ENCODE measurements at regions of chr2 and their contacts with region 1.

Region 1: DNA sequence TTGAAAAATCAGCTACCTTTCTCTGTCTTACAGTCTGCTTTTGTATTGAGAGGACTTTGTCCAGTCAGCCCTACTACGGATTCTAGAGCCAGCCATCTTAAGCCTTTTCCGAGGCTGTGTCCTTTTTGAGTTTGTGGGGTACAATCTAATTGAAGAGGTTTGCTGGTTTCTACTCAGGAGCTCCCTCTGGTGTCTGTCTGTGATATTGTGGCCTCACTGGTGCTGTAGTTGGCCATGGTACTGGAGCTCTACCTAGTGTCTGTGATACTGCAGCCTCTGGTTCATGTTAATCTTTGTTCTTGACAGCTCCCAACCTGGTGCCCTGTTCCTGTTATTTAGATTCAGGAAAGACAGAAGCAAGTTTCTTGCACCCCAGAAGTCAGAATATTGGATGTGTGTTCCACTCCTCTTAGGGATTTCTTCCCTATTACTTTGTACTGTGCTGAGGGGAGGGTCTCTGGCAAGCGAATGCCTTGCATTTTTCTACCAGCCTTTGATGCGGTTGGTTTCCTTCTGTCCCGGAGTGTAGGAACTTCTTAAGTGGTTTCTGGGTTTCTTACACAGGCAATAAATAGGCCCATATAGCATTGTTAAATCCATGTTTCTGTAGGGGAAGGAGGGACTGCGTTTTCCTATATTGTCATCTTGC is 78.5 kb downstream of the ACSL3 start:
- DNase-seq: peak; percentile 68
- ATAC-seq: peak; percentile 88
- H3K4me3 ChIP-seq: no peak overlapping the region
- H3K27ac ChIP-seq: no peak overlapping the region
- H3K4me1 ChIP-seq: peaks cover 4% of the 10 kb centered on the region; the same call in 1 of the 2 replicates
- H3K27me3 ChIP-seq: no peaks in the 10 kb centered on the region
- CTCF ChIP-seq: peak; percentile 88
- POLR2A ChIP-seq: no peak
- RAD21 ChIP-seq: peak; percentile 74

Region 2: GRCh38 chr2:222655787-222656525 is 283.4 kb before region 1 on chr2 and contains the start of gene FARSB:
- CTCF ChIA-PET with region 1: no interaction called
- POLR2A ChIA-PET with region 1: no interaction called
- dilution Hi-C with region 1: no loop called
- in situ Hi-C with region 1: no loop called
- intact Hi-C with region 1: loop called (anchors 1 kb)
- DNase-seq: peak; percentile 96
- ATAC-seq: peak; percentile 96
- H3K4me3 ChIP-seq: peak within 1 kb of the TSS; percentile 89
- H3K27ac ChIP-seq: peak within 1 kb of the TSS; percentile 82
- H3K4me1 ChIP-seq: no peaks in the 10 kb centered on the region; the same call in 1 of the 2 replicates
- H3K27me3 ChIP-seq: no peaks in the 10 kb centered on the region
- CTCF ChIP-seq: no peak
- POLR2A ChIP-seq: peak; percentile 47; the same call in 1 of the 2 replicates
- RAD21 ChIP-seq: no peak
- total RNA-seq, gene FARSB: 21.1 and 27.2 TPM in 2 replicates

Region 3: GRCh38 chr2:222690564-222691200 is 248.7 kb before region 1 on chr2:
- CTCF ChIA-PET with region 1: interaction called, 4 read pairs
- POLR2A ChIA-PET with region 1: no interaction called
- dilution Hi-C with region 1: no loop called
- in situ Hi-C with region 1: loop called (anchors 10 kb)
- intact Hi-C with region 1: loop called (anchors 1 kb)
- DNase-seq: peak; percentile 78
- ATAC-seq: peak; percentile 92
- H3K4me3 ChIP-seq: no peak overlapping the region
- H3K27ac ChIP-seq: no peak overlapping the region
- H3K4me1 ChIP-seq: no peaks in the 10 kb centered on the region
- H3K27me3 ChIP-seq: no peaks in the 10 kb centered on the region; the same call in 1 of the 2 replicates
- CTCF ChIP-seq: peak; percentile 100
- POLR2A ChIP-seq: no peak
- RAD21 ChIP-seq: peak; percentile 85

Region 4: GRCh38 chr2:222707689-222708525 is 231.4 kb before region 1 on chr2:
- CTCF ChIA-PET with region 1: interaction called, 7 read pairs
- POLR2A ChIA-PET with region 1: no interaction called
- dilution Hi-C with region 1: no loop called
- in situ Hi-C with region 1: no loop called
- intact Hi-C with region 1: loop called (anchors 5 kb)
- DNase-seq: peak; percentile 87
- ATAC-seq: peak; percentile 18
- H3K4me3 ChIP-seq: no peak overlapping the region
- H3K27ac ChIP-seq: no peak overlapping the region
- H3K4me1 ChIP-seq: peaks cover 11% of the 10 kb centered on the region
- H3K27me3 ChIP-seq: no peaks in the 10 kb centered on the region
- CTCF ChIP-seq: peak; percentile 81
- POLR2A ChIP-seq: no peak
- RAD21 ChIP-seq: peak; percentile 76

Region 5: DNA sequence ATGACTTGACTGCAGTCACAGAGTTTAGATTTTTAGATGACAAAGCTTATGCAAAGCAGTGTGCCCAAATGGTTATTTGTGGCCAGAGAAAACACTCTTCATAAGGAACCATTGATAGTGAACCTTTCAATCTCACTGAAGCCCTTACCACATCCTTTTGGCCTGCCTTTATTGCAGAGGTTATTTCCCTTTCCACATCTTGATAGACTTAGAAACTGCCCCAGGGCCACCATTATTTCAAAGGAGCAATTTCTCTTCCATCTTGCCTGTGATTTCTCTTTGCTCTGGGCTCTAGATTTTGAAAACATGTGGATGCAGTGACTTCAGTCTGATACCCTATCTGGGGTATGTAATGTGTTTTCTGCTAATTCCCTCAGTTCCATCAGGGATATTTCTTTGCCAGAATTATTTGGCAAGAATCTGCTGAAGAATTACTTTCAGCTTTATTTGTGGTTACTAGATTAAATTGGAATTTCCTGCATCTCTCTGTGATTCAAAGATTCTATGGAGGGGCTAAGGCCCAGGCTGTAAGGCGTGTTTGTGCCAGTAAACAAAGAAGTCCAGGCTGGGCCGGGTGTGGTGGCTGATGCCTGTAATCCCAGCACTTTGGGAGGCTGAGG is 216.9 kb before region 1 on chr2:
- CTCF ChIA-PET with region 1: no interaction called
- POLR2A ChIA-PET with region 1: no interaction called
- dilution Hi-C with region 1: no loop called
- in situ Hi-C with region 1: no loop called
- intact Hi-C with region 1: no loop called
- DNase-seq: peak; percentile 78
- ATAC-seq: peak; percentile 81
- H3K4me3 ChIP-seq: no peak overlapping the region
- H3K27ac ChIP-seq: peak overlapping the region; percentile 18; the same call in 1 of the 2 replicates
- H3K4me1 ChIP-seq: no peaks in the 10 kb centered on the region
- H3K27me3 ChIP-seq: no peaks in the 10 kb centered on the region
- CTCF ChIP-seq: no peak
- POLR2A ChIP-seq: no peak
- RAD21 ChIP-seq: no peak

Region 6: GRCh38 chr2:222797261-222797660 is 142.1 kb before region 1 on chr2:
- CTCF ChIA-PET with region 1: no interaction called
- POLR2A ChIA-PET with region 1: no interaction called
- dilution Hi-C with region 1: no loop called
- in situ Hi-C with region 1: no loop called
- intact Hi-C with region 1: loop called (anchors 2 kb)
- DNase-seq: peak; percentile 34
- ATAC-seq: peak; percentile 52
- H3K4me3 ChIP-seq: no peak overlapping the region
- H3K27ac ChIP-seq: no peak overlapping the region
- H3K4me1 ChIP-seq: peaks cover 8% of the 10 kb centered on the region
- H3K27me3 ChIP-seq: no peaks in the 10 kb centered on the region
- CTCF ChIP-seq: peak; percentile 47
- POLR2A ChIP-seq: no peak
- RAD21 ChIP-seq: peak; percentile 41

Region 7: GRCh38 chr2:222915092-222915957 is 24.0 kb before region 1 on chr2:
- CTCF ChIA-PET with region 1: interaction called, 6 read pairs
- POLR2A ChIA-PET with region 1: no interaction called
- dilution Hi-C with region 1: no loop called
- in situ Hi-C with region 1: no loop called
- intact Hi-C with region 1: loop called (anchors 2 kb)
- DNase-seq: peak; percentile 41
- ATAC-seq: no peak
- H3K4me3 ChIP-seq: no peak overlapping the region
- H3K27ac ChIP-seq: no peak overlapping the region
- H3K4me1 ChIP-seq: peaks cover 13% of the 10 kb centered on the region
- H3K27me3 ChIP-seq: no peaks in the 10 kb centered on the region
- CTCF ChIP-seq: peak; percentile 75
- POLR2A ChIP-seq: no peak
- RAD21 ChIP-seq: peak; percentile 66

Measured in IMR-90 (cell line).